Tibial artery (tissue), 4 donors: ENCODE measurements at regions of chr9 and their contacts with region 1.

Region 1: GRCh38 chr9:98998441-98999151 is 54.9 kb downstream of the COL15A1 start:
- DNase-seq: peak; percentile 79 to 91
- H3K4me3 ChIP-seq: peak overlapping the region; percentile 20 to 25
- H3K27ac ChIP-seq: peak overlapping the region; percentile 83 to 85
- H3K4me1 ChIP-seq: peaks cover 0 to 65% (median 47%) of the 10 kb centered on the region in 4 donors
- H3K27me3 ChIP-seq: no peaks in the 10 kb centered on the region
- CTCF ChIP-seq: peak; percentile 82 to 92

Region 2: DNA sequence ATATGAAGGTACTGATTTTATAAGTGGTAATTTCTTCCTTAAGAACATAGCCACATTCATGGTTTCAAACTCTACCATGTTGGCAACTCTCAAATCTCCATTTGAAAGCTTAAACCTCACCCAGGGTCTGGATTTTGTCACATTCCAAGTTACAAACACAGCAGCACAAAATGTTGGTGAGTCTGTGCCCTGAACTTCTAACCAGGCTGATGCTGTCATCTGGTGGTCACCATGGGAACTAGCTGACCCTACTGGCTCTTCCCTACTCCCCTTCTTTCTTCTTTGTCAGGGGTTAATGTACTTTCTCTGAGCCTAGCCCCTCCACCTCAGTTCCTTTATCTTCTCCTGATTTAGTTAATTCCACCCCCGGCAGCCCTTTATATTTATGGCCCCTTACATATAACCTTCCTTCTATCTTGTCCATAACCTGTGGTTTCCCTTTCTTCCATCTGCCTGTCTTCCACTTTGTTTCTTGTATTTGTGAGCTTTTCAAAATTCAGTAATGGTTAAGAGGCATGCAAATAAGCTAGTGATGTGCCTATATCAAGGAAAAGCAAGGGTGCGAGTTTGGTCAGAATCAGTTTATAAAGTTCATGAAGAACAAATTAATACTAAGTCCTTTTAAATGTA is 142.2 kb after region 1 on chr9:
- intact Hi-C with region 1: loop called (anchors 5 kb)
- DNase-seq: peak in 1 of 2 donors; percentile 35
- H3K4me3 ChIP-seq: no peak overlapping the region
- H3K27ac ChIP-seq: no peak overlapping the region
- H3K4me1 ChIP-seq: peaks cover 0 to 8% (median 0%) of the 10 kb centered on the region in 4 donors
- H3K27me3 ChIP-seq: no peaks in the 10 kb centered on the region
- CTCF ChIP-seq: peak; percentile 78 to 92